Right lobe of liver (tissue), 6 donors: ENCODE measurements at regions of chr16 and their contacts with region 1.

Region 1: DNA sequence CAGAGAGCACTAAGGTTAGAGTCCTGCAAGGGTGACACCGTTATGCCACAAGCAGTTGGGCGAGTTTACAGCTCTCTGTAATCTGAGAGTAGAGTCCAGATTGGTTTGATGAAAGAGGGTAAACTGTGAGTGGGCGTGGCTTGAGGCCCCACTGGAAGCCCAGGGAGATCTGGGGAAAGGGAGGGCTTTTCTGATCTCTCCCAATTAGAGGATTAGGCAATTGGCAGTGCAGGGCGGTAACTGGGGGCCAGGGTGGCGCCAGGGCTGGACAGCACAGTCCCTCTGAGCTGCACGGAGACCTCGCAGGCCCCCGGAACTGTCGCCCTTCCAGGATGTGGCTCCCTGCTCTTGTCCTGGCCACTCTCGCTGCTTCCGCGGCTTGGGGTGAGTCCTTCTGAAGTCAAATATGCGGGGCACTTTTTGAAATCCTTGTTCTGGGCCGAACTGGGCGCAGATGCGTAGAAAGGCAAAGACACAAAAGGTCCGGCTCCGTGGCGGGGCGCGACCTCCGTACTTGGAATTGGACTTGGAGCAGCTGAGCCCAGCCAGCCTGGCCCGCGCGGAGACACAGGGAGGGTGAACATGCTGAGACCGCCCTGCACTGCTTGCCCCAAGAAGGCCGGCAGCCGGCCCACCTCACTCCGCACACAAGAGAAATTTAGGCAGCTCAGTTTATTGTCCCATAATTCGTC is 72.4 kb downstream of the CES1 start:
- DNase-seq: peak; percentile 60 to 91 (median 86)
- ATAC-seq: peak; percentile 72 to 89 (median 75)
- H3K4me3 ChIP-seq: peak overlapping the region; percentile 26 to 74 (median 59)
- H3K27ac ChIP-seq: peak overlapping the region in 2 of 3 donors; percentile 74 to 78
- H3K4me1 ChIP-seq: peaks cover 0 to 31% (median 4%) of the 10 kb centered on the region in 4 donors
- H3K27me3 ChIP-seq: no peaks in the 10 kb centered on the region
- CTCF ChIP-seq: no peak
- POLR2A ChIP-seq: no peak

Region 2: GRCh38 chr16:55832758-55833540 is 72.5 kb after region 1 on chr16 and contains the start of gene CES1:
- intact Hi-C with region 1: loop called in 1 of 2 experiments (anchors 5 kb)
- DNase-seq: peak; percentile 90 to 98 (median 97)
- ATAC-seq: peak; percentile 75 to 90 (median 79)
- H3K4me3 ChIP-seq: peak within 1 kb of the TSS; percentile 54 to 88 (median 79)
- H3K27ac ChIP-seq: peak within 1 kb of the TSS in 2 of 3 donors; percentile 84 to 93
- H3K4me1 ChIP-seq: peaks cover 0 to 45% (median 12%) of the 10 kb centered on the region in 4 donors
- H3K27me3 ChIP-seq: no peaks in the 10 kb centered on the region
- CTCF ChIP-seq: no peak
- POLR2A ChIP-seq: peak; percentile 92
- total RNA-seq, gene CES1: 847 to 4,059 (median 1,770) TPM